Activated CD4-positive, alpha-beta T cell treated with anti-CD3 and anti-CD28 coated beads for 36 hours (primary cell): ENCODE measurements at regions of chr5 and their contacts with region 1.

Region 1: GRCh38 chr5:40688127-40688761 is 8.5 kb downstream of the PTGER4 start:
- DNase-seq: peak; percentile 92
- ATAC-seq: peak; percentile 71
- H3K4me3 Mint-ChIP-seq: peak overlapping the region; percentile 93
- H3K27ac Mint-ChIP-seq: peak overlapping the region; percentile 90
- H3K4me1 Mint-ChIP-seq: peaks cover 69% of the 10 kb centered on the region
- H3K27me3 Mint-ChIP-seq: no peaks in the 10 kb centered on the region

Region 2: DNA sequence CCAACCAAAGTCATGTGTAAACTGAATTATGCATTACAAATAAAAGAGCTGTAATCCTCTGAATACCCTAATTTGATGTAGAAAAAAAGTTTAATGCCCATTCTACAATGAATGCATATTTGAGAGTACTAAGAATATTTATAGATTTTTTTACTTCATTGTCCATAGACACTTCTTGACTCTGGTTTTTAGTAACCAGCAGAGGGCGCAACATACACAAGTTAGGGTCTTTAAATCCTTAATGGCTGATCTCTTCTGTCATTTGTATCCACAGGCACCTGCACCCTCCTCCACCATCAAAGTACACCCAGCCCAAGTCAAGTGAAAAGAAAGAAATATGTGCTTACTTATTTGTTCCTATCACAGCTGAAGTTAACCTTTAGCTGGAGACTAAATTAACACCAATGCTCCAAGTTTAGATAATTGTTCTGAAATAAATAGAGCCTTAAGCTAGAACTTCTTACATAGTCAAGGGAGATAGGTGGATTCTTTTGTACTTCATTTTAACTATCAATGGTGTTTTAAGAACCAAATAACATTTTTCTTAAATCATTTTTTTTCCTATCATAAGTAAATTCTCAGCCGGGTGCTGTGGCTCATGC is 739.3 kb before region 1 on chr5:
- CTCF ChIA-PET with region 1: interaction called, 16 read pairs
- POLR2A ChIA-PET with region 1: no interaction called
- intact Hi-C with region 1: loop called (anchors 1 kb)
- DNase-seq: peak; percentile 70
- ATAC-seq: peak; percentile 97
- H3K4me3 Mint-ChIP-seq: no peak overlapping the region
- H3K27ac Mint-ChIP-seq: no peak overlapping the region
- H3K4me1 Mint-ChIP-seq: peaks cover 5% of the 10 kb centered on the region
- H3K27me3 Mint-ChIP-seq: no peaks in the 10 kb centered on the region

Region 3: DNA sequence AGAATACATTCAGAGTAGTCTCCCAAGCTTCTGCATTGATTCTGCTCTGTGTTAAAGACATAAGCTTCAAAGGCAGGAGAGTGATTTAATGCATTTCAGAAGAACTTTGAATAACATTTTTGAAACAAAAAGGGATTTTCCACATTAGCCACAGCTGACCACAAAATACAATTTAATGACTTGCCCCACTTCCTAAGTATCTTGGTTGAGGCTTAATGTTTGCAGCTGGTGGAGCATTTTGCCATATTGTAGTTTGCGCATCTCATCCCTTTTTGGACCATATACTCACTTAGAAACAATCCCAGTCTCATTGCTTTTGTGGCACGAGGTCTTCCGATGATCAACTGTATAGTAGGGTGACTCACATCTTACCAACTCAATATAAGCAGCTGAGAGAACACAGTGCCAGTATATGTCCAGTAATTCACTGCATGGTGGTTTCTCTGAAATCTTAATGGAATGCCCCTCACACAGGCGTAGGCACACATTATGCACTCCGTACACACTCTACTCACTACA is 464.3 kb before region 1 on chr5:
- CTCF ChIA-PET with region 1: no interaction called
- POLR2A ChIA-PET with region 1: interaction called, 4 read pairs
- intact Hi-C with region 1: loop called (anchors 2 kb)
- DNase-seq: peak; percentile 63
- ATAC-seq: peak; percentile 87
- H3K4me3 Mint-ChIP-seq: peak overlapping the region; percentile 50
- H3K27ac Mint-ChIP-seq: peak overlapping the region; percentile 94
- H3K4me1 Mint-ChIP-seq: peaks cover 64% of the 10 kb centered on the region
- H3K27me3 Mint-ChIP-seq: no peaks in the 10 kb centered on the region

Region 4: GRCh38 chr5:40333459-40334244 is 354.6 kb before region 1 on chr5:
- CTCF ChIA-PET with region 1: no interaction called
- POLR2A ChIA-PET with region 1: interaction called, 3 read pairs
- intact Hi-C with region 1: loop called in 1 of 2 experiments (anchors 2 kb)
- DNase-seq: peak; percentile 49
- ATAC-seq: peak; percentile 96
- H3K4me3 Mint-ChIP-seq: no peak overlapping the region
- H3K27ac Mint-ChIP-seq: no peak overlapping the region
- H3K4me1 Mint-ChIP-seq: peaks cover 41% of the 10 kb centered on the region
- H3K27me3 Mint-ChIP-seq: no peaks in the 10 kb centered on the region

Region 5: GRCh38 chr5:40437452-40437861 is 250.8 kb before region 1 on chr5:
- CTCF ChIA-PET with region 1: interaction called, 4 read pairs
- POLR2A ChIA-PET with region 1: no interaction called
- intact Hi-C with region 1: loop called (anchors 1 to 2 kb)
- DNase-seq: peak; percentile 55
- ATAC-seq: peak; percentile 61
- H3K4me3 Mint-ChIP-seq: no peak overlapping the region
- H3K27ac Mint-ChIP-seq: peak overlapping the region; percentile 61
- H3K4me1 Mint-ChIP-seq: peaks cover 80% of the 10 kb centered on the region
- H3K27me3 Mint-ChIP-seq: no peaks in the 10 kb centered on the region

Region 6: GRCh38 chr5:40521925-40522324 is 166.3 kb before region 1 on chr5:
- CTCF ChIA-PET with region 1: no interaction called
- POLR2A ChIA-PET with region 1: no interaction called
- intact Hi-C with region 1: no loop called
- DNase-seq: no peak
- ATAC-seq: no peak
- H3K4me3 Mint-ChIP-seq: no peak overlapping the region
- H3K27ac Mint-ChIP-seq: no peak overlapping the region
- H3K4me1 Mint-ChIP-seq: peaks cover 8% of the 10 kb centered on the region
- H3K27me3 Mint-ChIP-seq: no peaks in the 10 kb centered on the region

Region 7: DNA sequence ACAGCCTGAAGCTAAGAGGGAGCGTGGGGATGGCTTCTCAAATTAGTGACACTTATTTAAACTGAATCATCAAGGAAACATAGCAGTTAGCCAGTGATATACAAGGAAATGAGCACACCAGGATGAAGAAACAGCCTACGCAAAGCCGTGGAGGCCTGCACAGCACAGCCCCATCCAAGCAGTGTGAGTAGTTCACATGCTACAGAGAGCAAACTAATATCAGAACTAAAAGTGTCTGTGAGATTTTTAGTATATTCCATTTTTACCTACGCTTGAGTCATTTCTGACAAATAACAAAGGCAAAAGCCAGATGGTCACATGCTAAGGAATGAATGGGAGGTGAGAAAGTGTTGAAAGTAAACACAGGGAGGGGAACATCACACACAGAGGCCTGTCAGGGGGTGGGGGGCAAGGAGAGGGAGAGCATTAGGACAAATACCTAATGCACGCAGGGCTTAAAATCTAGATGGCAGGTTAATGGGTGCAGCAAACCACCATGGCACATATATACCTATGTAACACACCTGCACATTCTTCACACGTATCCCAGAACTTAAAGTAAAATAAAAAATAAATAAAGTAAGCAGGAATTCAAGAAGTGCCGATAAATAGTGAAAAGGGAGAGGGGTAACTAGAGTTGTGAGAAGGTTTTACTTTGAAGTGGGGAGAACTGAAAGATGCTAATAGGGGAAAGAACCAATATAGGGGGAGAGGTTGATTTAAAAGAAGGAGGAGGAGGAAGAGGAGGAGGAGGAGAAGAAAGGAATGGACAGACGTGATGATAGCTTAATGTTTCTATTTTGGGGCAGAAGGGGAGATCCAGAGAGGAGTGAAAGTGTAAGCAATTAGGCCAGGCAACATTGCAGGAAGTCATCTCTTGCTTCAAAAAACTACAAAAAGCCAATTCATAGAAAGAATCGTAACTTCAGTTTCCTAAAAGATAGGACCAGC is 109.5 kb before region 1 on chr5:
- CTCF ChIA-PET with region 1: interaction called, 3 read pairs
- POLR2A ChIA-PET with region 1: no interaction called
- intact Hi-C with region 1: loop called in 1 of 2 experiments (anchors 1 kb)
- DNase-seq: peak; percentile 84
- ATAC-seq: peak; percentile 95
- H3K4me3 Mint-ChIP-seq: peak overlapping the region; percentile 49
- H3K27ac Mint-ChIP-seq: peak overlapping the region; percentile 72
- H3K4me1 Mint-ChIP-seq: peaks cover 44% of the 10 kb centered on the region
- H3K27me3 Mint-ChIP-seq: no peaks in the 10 kb centered on the region

Region 8: GRCh38 chr5:40879163-40879942 is 191.1 kb after region 1 on chr5:
- CTCF ChIA-PET with region 1: interaction called, 3 read pairs
- POLR2A ChIA-PET with region 1: no interaction called
- intact Hi-C with region 1: loop called (anchors 2 to 5 kb)
- DNase-seq: no peak
- ATAC-seq: no peak
- H3K4me3 Mint-ChIP-seq: no peak overlapping the region
- H3K27ac Mint-ChIP-seq: no peak overlapping the region
- H3K4me1 Mint-ChIP-seq: peaks cover 6% of the 10 kb centered on the region
- H3K27me3 Mint-ChIP-seq: peaks cover under 1% of the 10 kb centered on the region

Region 9: DNA sequence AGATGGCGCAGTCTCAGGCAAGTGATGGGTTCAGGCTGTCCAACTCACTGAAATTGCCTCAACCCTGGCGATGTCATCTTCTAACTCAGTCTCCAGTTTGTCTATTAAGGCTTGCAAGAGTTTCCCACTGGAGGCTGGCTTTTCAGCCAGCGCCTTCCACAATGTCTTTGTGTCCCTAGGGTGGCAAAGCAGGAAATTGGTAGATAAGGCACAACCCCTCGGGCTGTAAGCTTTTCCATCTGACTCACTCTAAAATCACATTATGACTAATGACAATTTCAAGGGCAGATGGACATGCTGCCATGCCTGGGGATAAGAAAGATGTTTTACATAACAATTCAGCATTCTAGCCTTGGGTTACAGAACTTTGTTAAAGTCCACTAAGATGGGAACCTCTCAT is 321.0 kb after region 1 on chr5:
- CTCF ChIA-PET with region 1: no interaction called
- POLR2A ChIA-PET with region 1: no interaction called
- intact Hi-C with region 1: no loop called
- DNase-seq: no peak
- ATAC-seq: no peak
- H3K4me3 Mint-ChIP-seq: no peak overlapping the region
- H3K27ac Mint-ChIP-seq: no peak overlapping the region
- H3K4me1 Mint-ChIP-seq: no peaks in the 10 kb centered on the region
- H3K27me3 Mint-ChIP-seq: peaks cover 12% of the 10 kb centered on the region